PC-3 (cell line): ENCODE measurements at regions of chr20 and their contacts with region 1.

Region 1: DNA sequence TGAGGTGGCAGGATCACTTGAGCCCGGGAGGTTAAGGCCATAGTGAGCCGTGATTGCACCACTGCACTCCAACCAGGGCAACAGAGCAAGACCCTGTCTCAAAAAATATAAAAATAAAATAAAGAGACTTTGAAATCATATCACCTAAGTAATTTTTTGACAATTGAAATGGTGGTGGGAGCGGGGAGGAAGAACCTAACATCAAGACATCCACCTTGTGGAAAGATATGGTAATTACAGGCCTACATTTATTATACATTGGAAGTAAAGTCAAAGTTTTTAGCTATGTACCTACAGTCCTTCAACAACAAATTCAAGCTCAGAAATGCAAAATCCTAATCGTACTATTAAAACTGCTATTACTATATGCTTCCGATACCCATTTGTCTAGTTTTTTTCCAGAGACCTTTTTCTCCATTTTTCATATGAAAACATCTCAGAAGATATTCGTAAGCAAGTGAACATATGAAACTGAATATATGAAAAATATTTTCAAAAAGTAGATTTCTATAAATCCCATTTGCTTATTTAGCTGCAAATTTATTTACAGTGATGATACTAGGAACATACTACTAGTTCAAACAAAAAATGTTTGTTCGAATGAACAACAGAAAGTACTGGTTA is 83.3 kb downstream of the SYCP2 start:
- DNase-seq: peak; percentile 78
- ATAC-seq: peak; percentile 5; the same call in 1 of the 2 replicates
- H3K4me3 ChIP-seq: no peak overlapping the region
- H3K27ac ChIP-seq: no peak overlapping the region
- H3K4me1 ChIP-seq: peaks cover 28% of the 10 kb centered on the region
- H3K27me3 ChIP-seq: no peaks in the 10 kb centered on the region
- CTCF ChIP-seq: peak; percentile 78

Region 2: GRCh38 chr20:59598625-59599310 is 251.4 kb before region 1 on chr20:
- CTCF ChIA-PET with region 1: interaction called, 3 read pairs
- POLR2A ChIA-PET with region 1: no interaction called
- intact Hi-C with region 1: loop called (anchors 5 kb)
- DNase-seq: peak; percentile 50
- ATAC-seq: peak; percentile 89
- H3K4me3 ChIP-seq: no peak overlapping the region
- H3K27ac ChIP-seq: no peak overlapping the region
- H3K4me1 ChIP-seq: no peaks in the 10 kb centered on the region
- H3K27me3 ChIP-seq: peaks cover 71% of the 10 kb centered on the region
- CTCF ChIP-seq: peak; percentile 93

Region 3: DNA sequence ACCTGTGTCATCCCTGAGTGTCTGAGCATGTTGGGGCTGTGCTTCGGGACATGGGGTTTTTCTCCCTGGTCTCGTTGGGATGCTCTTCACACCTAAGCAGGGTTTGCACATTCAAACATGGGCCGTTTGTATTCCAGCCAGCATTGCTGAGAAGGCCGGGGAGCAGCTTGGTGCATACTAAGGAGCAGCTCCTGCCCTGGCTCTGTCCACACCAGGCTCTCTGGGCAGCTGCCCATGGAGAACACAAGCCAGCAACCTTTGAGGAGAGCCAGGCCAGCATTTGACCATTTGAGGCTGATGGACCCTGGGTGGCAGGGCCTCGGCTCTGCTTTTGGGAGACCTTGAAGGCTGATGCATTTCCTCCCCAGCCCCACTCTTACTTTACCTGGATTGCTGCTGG is 153.7 kb before region 1 on chr20:
- CTCF ChIA-PET with region 1: no interaction called
- POLR2A ChIA-PET with region 1: no interaction called
- intact Hi-C with region 1: no loop called
- DNase-seq: no peak
- ATAC-seq: no peak
- H3K4me3 ChIP-seq: no peak overlapping the region
- H3K27ac ChIP-seq: no peak overlapping the region
- H3K4me1 ChIP-seq: no peaks in the 10 kb centered on the region
- H3K27me3 ChIP-seq: peaks cover 76% of the 10 kb centered on the region
- CTCF ChIP-seq: no peak

Region 4: GRCh38 chr20:59782986-59783640 is 67.0 kb before region 1 on chr20:
- CTCF ChIA-PET with region 1: interaction called, 57 read pairs
- POLR2A ChIA-PET with region 1: interaction called, 5 read pairs
- intact Hi-C with region 1: loop called (anchors 1 kb)
- DNase-seq: peak; percentile 80
- ATAC-seq: peak; percentile 57
- H3K4me3 ChIP-seq: no peak overlapping the region
- H3K27ac ChIP-seq: no peak overlapping the region
- H3K4me1 ChIP-seq: no peaks in the 10 kb centered on the region; the same call in 1 of the 2 replicates
- H3K27me3 ChIP-seq: no peaks in the 10 kb centered on the region
- CTCF ChIP-seq: peak; percentile 95

Region 5: GRCh38 chr20:59788811-59789397 is 61.2 kb before region 1 on chr20:
- CTCF ChIA-PET with region 1: interaction called, 57 read pairs
- POLR2A ChIA-PET with region 1: interaction called, 3 read pairs
- intact Hi-C with region 1: loop called (anchors 1 kb)
- DNase-seq: no peak
- ATAC-seq: no peak
- H3K4me3 ChIP-seq: no peak overlapping the region
- H3K27ac ChIP-seq: no peak overlapping the region
- H3K4me1 ChIP-seq: peaks cover 13% of the 10 kb centered on the region; the same call in 1 of the 2 replicates
- H3K27me3 ChIP-seq: no peaks in the 10 kb centered on the region
- CTCF ChIP-seq: no peak

Region 6: GRCh38 chr20:59835448-59836395 is 14.4 kb before region 1 on chr20:
- CTCF ChIA-PET with region 1: interaction called, 5 read pairs
- POLR2A ChIA-PET with region 1: interaction called, 6 read pairs
- intact Hi-C with region 1: loop called (anchors 1 kb)
- DNase-seq: peak; percentile 91
- ATAC-seq: peak; percentile 64
- H3K4me3 ChIP-seq: peak overlapping the region; percentile 76
- H3K27ac ChIP-seq: peak overlapping the region; percentile 53
- H3K4me1 ChIP-seq: peaks cover 77% of the 10 kb centered on the region
- H3K27me3 ChIP-seq: no peaks in the 10 kb centered on the region
- CTCF ChIP-seq: no peak

Region 7: GRCh38 chr20:59925939-59926338 is 75.8 kb after region 1 on chr20:
- CTCF ChIA-PET with region 1: interaction called, 3 read pairs
- POLR2A ChIA-PET with region 1: interaction called, 3 read pairs
- intact Hi-C with region 1: loop called (anchors 2 kb)
- DNase-seq: peak; percentile 97
- ATAC-seq: peak; percentile 94
- H3K4me3 ChIP-seq: peak overlapping the region; percentile 1; the same call in 1 of the 2 replicates
- H3K27ac ChIP-seq: peak overlapping the region; percentile 23
- H3K4me1 ChIP-seq: peaks cover 32% of the 10 kb centered on the region
- H3K27me3 ChIP-seq: no peaks in the 10 kb centered on the region
- CTCF ChIP-seq: no peak

Region 8: GRCh38 chr20:59940174-59940971 is 90.2 kb after region 1 on chr20 and contains the starts of genes FAM217B and PPP1R3D:
- CTCF ChIA-PET with region 1: interaction called, 3 read pairs
- POLR2A ChIA-PET with region 1: interaction called, 4 read pairs
- intact Hi-C with region 1: loop called (anchors 2 kb)
- DNase-seq: peak; percentile 96
- ATAC-seq: peak; percentile 90
- H3K4me3 ChIP-seq: peak within 1 kb of the TSS; percentile 72
- H3K27ac ChIP-seq: peak within 1 kb of the TSS; percentile 73
- H3K4me1 ChIP-seq: peaks cover 36% of the 10 kb centered on the region
- H3K27me3 ChIP-seq: no peaks in the 10 kb centered on the region
- CTCF ChIP-seq: no peak
- total RNA-seq, gene FAM217B: 6.3 and 7.2 TPM in 2 replicates
- total RNA-seq, gene PPP1R3D: 5.6 and 6.3 TPM in 2 replicates